ENCODE measurements at regions of chr1 and their contacts with region 1.

Region 1: DNA sequence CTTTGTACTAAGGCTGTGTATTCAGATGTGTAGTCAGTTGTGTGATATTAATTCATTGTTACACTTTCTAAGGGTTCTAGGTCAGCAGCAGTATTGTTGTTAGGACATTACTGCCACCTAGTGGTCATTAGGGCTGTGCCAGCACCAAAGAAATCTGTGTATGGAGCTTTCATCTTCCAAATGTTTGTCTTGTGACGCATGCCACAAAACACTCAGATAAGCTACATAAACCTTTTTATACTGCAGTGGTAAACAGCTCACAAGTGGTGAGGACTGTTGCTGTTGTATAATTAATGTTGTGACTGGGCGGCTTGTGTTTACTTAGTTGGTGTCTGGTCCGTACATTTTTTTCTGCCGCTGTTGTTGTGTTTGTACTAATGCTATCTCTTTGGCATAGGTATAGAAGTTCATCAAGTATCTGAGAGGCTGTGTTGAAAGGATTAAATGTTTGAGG is 51.7 kb downstream of the S1PR1 start:
- DNase-seq: peak; percentile 82
- H3K4me3 ChIP-seq: peak overlapping the region; percentile 31; the same call in 1 of the 2 replicates
- H3K27ac ChIP-seq: no peak overlapping the region
- H3K27me3 ChIP-seq: no peaks in the 10 kb centered on the region
- CTCF ChIP-seq: peak; percentile 92

Region 2: DNA sequence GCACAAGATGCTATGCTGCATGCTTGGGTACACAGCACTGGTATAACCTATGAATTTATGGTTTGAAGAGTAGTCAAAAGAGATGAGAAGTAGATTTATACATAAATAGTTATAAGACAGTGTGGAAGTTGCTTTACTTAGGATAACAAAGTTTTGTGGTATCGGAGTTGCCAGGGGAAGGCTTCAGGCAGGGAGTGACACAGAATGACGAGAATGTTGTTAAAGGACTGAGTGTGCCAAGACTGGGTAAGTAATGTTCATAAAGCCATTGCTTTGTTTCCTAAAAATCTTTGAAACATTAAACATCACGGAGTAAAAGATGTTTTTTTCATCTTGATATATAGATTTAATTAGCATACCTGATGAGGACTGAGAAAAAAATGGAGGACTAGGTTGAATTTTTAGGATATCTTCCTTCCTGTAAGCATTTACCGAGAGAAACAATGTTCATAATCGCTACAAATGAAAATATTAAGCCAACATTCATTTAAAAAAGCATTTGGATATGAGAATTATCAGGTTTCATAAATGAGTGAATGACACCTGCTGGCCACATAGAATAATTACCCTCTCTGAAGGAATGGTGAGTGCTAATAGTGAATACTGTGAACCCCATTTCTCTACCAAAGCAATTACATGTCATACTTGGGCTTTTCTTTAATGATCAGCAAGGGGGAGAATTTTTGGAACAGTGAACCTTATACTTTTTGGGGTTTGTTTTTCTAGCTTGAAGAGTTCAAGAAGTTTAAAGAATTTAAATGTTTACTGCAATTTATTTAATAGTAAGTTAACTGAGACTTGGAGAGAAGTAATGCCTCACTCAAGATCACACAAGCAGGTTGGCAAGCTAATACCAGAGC is 422.2 kb before region 1 on chr1:
- CTCF ChIA-PET with region 1: interaction called, 14 read pairs
- POLR2A ChIA-PET with region 1: no interaction called
- DNase-seq: no peak
- H3K4me3 ChIP-seq: no peak overlapping the region
- H3K27ac ChIP-seq: no peak overlapping the region
- H3K27me3 ChIP-seq: no peaks in the 10 kb centered on the region
- CTCF ChIP-seq: peak; percentile 60

Region 3: GRCh38 chr1:100921109-100921706 is 367.3 kb before region 1 on chr1:
- CTCF ChIA-PET with region 1: interaction called, 149 read pairs
- POLR2A ChIA-PET with region 1: no interaction called
- DNase-seq: peak; percentile 21
- H3K4me3 ChIP-seq: no peak overlapping the region
- H3K27ac ChIP-seq: no peak overlapping the region
- H3K27me3 ChIP-seq: no peaks in the 10 kb centered on the region
- CTCF ChIP-seq: peak; percentile 59

Region 4: DNA sequence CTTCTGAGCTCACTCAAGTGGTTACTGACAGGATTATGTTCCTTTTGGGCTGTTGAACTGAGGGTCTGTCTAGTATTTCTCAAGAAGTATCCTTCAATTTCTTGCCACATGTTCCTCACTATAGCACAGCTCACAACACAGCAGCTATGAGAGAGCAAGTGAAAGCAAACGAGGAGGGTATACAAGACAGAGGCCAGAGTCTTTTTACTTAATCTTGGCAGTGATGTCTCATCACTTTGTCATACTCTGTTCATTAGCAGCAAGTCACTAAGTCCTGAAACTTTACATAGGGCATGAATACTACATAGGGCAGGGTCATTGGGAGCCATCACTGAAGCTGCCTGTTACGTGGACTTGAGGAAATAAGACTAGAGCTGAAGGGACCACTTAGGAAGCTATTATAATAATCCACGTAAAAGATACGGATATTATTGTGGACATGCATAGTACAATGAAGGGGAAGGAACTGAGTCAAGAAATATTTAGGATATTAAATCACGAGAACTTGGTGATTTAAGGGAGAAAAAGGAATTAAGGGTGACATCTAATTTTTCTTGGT is 328.9 kb before region 1 on chr1:
- CTCF ChIA-PET with region 1: interaction called, 18 read pairs
- POLR2A ChIA-PET with region 1: no interaction called
- DNase-seq: no peak
- H3K4me3 ChIP-seq: no peak overlapping the region
- H3K27ac ChIP-seq: no peak overlapping the region
- H3K27me3 ChIP-seq: no peaks in the 10 kb centered on the region
- CTCF ChIP-seq: no peak

Region 5: GRCh38 chr1:101025657-101026504 is 262.6 kb before region 1 on chr1 and contains the start of gene DPH5:
- CTCF ChIA-PET with region 1: interaction called, 11 read pairs
- POLR2A ChIA-PET with region 1: interaction called, 3 read pairs
- DNase-seq: peak; percentile 74
- H3K4me3 ChIP-seq: peak within 1 kb of the TSS; percentile 82
- H3K27ac ChIP-seq: peak within 1 kb of the TSS; percentile 89
- H3K27me3 ChIP-seq: no peaks in the 10 kb centered on the region
- CTCF ChIP-seq: no peak
- polyA plus RNA-seq, gene DPH5: 68.6 and 87.4 TPM in 2 replicates

Region 6: DNA sequence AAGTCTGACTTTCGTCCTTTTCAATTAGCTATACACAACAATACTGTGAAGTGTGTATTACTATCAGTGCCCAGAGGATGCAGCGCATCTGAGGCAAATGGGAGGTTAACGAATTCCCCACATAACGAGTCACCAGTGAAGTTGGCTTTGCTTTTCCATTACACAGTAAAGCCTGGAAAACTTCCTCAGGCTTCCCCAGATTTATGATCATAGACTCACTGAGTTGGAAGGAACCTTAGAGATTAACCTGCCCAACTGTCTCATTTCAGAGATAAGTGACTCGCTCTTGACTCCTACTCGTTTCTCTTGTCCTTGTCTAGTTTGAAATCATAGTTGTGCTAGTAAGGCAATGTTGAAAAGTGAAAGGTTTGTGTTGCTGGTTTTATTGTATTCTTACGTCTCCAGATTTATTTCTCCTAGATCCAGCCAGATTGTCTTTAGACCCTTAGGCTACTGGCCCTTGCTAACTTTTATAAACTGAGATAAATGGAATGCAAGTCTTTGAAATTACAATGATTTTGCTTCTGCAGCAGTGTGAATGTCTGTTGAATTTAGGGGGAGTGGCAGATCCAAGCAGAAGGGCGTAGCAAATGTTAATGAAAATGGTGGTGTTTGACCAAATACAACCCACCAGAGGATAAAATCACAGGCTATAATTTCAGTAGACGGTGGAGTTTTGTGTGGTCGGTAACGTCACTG is 34.4 kb before region 1 on chr1:
- CTCF ChIA-PET with region 1: interaction called, 29 read pairs
- POLR2A ChIA-PET with region 1: no interaction called
- DNase-seq: no peak
- H3K4me3 ChIP-seq: no peak overlapping the region
- H3K27ac ChIP-seq: no peak overlapping the region
- H3K27me3 ChIP-seq: no peaks in the 10 kb centered on the region
- CTCF ChIP-seq: no peak

Region 7: GRCh38 chr1:101309334-101310311 is 21.1 kb after region 1 on chr1:
- CTCF ChIA-PET with region 1: interaction called, 16 read pairs
- POLR2A ChIA-PET with region 1: no interaction called
- DNase-seq: no peak
- H3K4me3 ChIP-seq: peak overlapping the region; percentile 29
- H3K27ac ChIP-seq: no peak overlapping the region
- H3K27me3 ChIP-seq: peaks cover 39% of the 10 kb centered on the region
- CTCF ChIP-seq: peak; percentile 89

Region 8: GRCh38 chr1:101346419-101346818 is 57.9 kb after region 1 on chr1:
- CTCF ChIA-PET with region 1: no interaction called
- POLR2A ChIA-PET with region 1: no interaction called
- DNase-seq: no peak
- H3K4me3 ChIP-seq: no peak overlapping the region
- H3K27ac ChIP-seq: no peak overlapping the region
- H3K27me3 ChIP-seq: no peaks in the 10 kb centered on the region
- CTCF ChIP-seq: no peak